ENCODE measurements at regions of chr11 and their contacts with region 1.

Region 1: GRCh38 chr11:12693479-12694181 is 19.4 kb downstream of the TEAD1 start:
- DNase-seq: peak; percentile 96
- ATAC-seq: peak; percentile 82
- H3K4me3 ChIP-seq: peak overlapping the region; percentile 58
- H3K27ac ChIP-seq: peak overlapping the region; percentile 99
- H3K4me1 ChIP-seq: peaks cover 83% of the 10 kb centered on the region
- H3K27me3 ChIP-seq: no peaks in the 10 kb centered on the region
- CTCF ChIP-seq: no peak

Region 2: DNA sequence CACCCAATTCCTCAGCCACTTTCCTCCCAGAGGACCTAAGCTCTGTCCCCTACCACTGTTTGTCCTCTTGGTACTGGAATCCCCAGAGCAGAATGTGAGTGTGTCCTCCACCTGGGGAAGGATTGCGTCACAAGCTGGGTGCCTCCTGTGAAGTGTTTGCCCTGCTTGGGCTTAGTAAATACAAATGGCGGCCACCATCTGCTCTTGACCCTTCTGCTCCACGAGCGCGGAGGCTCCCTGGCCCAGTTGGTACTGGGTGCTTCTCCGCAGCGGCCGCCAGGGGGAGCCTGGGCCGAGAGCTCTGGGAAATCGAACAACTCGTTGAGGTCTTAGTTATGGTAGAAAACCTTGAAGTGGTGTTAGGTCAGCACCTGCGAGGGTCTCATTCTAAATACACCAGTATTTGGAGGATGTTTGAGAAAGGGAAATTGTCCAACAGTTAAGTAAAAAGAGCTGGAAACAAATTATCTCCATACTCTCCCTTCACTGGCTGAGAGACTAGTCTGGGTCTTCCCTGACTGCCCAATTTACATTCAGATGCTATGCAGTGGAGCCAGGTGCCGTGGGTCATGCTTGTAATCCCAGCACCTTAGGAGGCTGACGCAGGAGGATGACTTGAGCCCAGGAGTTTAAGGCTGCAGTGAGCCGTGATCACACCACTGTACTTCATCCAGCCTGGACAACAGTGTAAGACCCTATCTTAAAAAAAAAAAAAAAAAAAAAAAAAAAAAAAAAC is 94.1 kb before region 1 on chr11:
- CTCF ChIA-PET with region 1: no interaction called
- POLR2A ChIA-PET with region 1: no interaction called
- intact Hi-C with region 1: no loop called
- DNase-seq: peak; percentile 42
- ATAC-seq: peak; percentile 48
- H3K4me3 ChIP-seq: no peak overlapping the region
- H3K27ac ChIP-seq: no peak overlapping the region
- H3K4me1 ChIP-seq: peaks cover 12% of the 10 kb centered on the region; the same call in 1 of the 2 replicates
- H3K27me3 ChIP-seq: no peaks in the 10 kb centered on the region
- CTCF ChIP-seq: peak; percentile 88

Region 3: GRCh38 chr11:12724301-12725046 is 30.8 kb after region 1 on chr11:
- CTCF ChIA-PET with region 1: no interaction called
- POLR2A ChIA-PET with region 1: no interaction called
- intact Hi-C with region 1: loop called (anchors 1 kb)
- DNase-seq: peak; percentile 96
- ATAC-seq: peak; percentile 51
- H3K4me3 ChIP-seq: peak overlapping the region; percentile 62
- H3K27ac ChIP-seq: peak overlapping the region; percentile 99
- H3K4me1 ChIP-seq: peaks cover 91% of the 10 kb centered on the region
- H3K27me3 ChIP-seq: no peaks in the 10 kb centered on the region
- CTCF ChIP-seq: no peak

Region 4: GRCh38 chr11:12761029-12761428 is 67.4 kb after region 1 on chr11:
- CTCF ChIA-PET with region 1: no interaction called
- POLR2A ChIA-PET with region 1: no interaction called
- intact Hi-C with region 1: loop called (anchors 2 kb)
- DNase-seq: peak; percentile 48
- ATAC-seq: peak; percentile 85
- H3K4me3 ChIP-seq: no peak overlapping the region
- H3K27ac ChIP-seq: no peak overlapping the region
- H3K4me1 ChIP-seq: peaks cover 10% of the 10 kb centered on the region
- H3K27me3 ChIP-seq: no peaks in the 10 kb centered on the region
- CTCF ChIP-seq: peak; percentile 62

Region 5: GRCh38 chr11:12769834-12770345 is 76.3 kb after region 1 on chr11:
- CTCF ChIA-PET with region 1: no interaction called
- POLR2A ChIA-PET with region 1: interaction called, 5 read pairs
- intact Hi-C with region 1: loop called (anchors 5 kb)
- DNase-seq: peak; percentile 82
- ATAC-seq: peak; percentile 83
- H3K4me3 ChIP-seq: peak overlapping the region; percentile 5; the same call in 1 of the 2 replicates
- H3K27ac ChIP-seq: peak overlapping the region; percentile 87
- H3K4me1 ChIP-seq: peaks cover 42% of the 10 kb centered on the region
- H3K27me3 ChIP-seq: no peaks in the 10 kb centered on the region
- CTCF ChIP-seq: no peak

Region 6: GRCh38 chr11:12802418-12803085 is 108.9 kb after region 1 on chr11:
- CTCF ChIA-PET with region 1: no interaction called
- POLR2A ChIA-PET with region 1: no interaction called
- intact Hi-C with region 1: loop called (anchors 1 kb)
- DNase-seq: peak; percentile 95
- ATAC-seq: peak; percentile 66
- H3K4me3 ChIP-seq: peak overlapping the region; percentile 40
- H3K27ac ChIP-seq: peak overlapping the region; percentile 93
- H3K4me1 ChIP-seq: peaks cover 60% of the 10 kb centered on the region
- H3K27me3 ChIP-seq: no peaks in the 10 kb centered on the region
- CTCF ChIP-seq: no peak

Region 7: GRCh38 chr11:12841946-12842630 is 148.5 kb after region 1 on chr11:
- CTCF ChIA-PET with region 1: no interaction called
- POLR2A ChIA-PET with region 1: no interaction called
- intact Hi-C with region 1: no loop called
- DNase-seq: peak; percentile 42
- ATAC-seq: peak; percentile 38
- H3K4me3 ChIP-seq: no peak overlapping the region
- H3K27ac ChIP-seq: peak overlapping the region; percentile 8; the same call in 1 of the 2 replicates
- H3K4me1 ChIP-seq: peaks cover 27% of the 10 kb centered on the region
- H3K27me3 ChIP-seq: no peaks in the 10 kb centered on the region
- CTCF ChIP-seq: no peak

Region 8: GRCh38 chr11:12893787-12894672 is 200.4 kb after region 1 on chr11:
- CTCF ChIA-PET with region 1: no interaction called
- POLR2A ChIA-PET with region 1: no interaction called
- intact Hi-C with region 1: no loop called
- DNase-seq: peak; percentile 67
- ATAC-seq: peak; percentile 64
- H3K4me3 ChIP-seq: no peak overlapping the region
- H3K27ac ChIP-seq: no peak overlapping the region
- H3K4me1 ChIP-seq: no peaks in the 10 kb centered on the region
- H3K27me3 ChIP-seq: no peaks in the 10 kb centered on the region
- CTCF ChIP-seq: peak; percentile 89

Measured in PC-3 (cell line).